ENCODE measurements at regions of chr22 and their contacts with region 1.

Region 1: DNA sequence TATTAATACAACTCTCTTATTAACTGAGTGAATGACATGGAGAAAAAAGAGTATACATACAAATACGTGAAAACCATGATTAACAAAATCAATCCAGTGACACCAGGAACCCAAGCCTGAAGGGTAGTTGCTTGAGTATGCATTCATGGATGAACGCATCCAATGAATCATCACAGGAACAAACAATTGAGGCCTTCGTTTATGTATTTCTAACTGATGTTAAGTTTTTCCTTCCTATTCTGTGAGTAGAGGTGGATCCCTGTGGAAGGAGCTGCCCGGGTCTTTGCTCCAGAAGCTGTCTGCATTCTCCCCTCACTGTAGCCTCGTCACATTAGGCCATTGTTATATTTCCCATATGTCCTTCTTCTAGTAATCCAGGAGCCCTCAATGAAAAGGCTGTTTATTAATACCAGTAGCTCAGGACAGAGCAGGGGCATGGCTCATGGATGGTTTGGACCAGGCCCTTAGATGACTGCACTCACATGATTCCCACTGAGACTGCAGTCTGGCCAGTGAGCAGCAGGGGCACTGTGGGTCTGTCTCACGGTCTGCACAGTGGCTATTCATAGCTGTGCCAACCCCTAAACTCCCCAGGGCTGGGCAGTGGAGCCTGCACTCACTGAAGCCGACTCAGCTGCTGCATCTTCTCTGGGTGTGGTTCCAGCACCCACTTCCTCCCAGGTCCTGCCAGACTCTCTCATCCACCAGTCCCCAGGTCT is 128.1 kb upstream of the TOP3B start:
- DNase-seq: peak; percentile 93
- ATAC-seq: peak; percentile 97
- H3K4me3 ChIP-seq: no peak overlapping the region; the same call in 1 of the 2 replicates
- H3K27ac ChIP-seq: peak overlapping the region; percentile 88
- H3K4me1 ChIP-seq: peaks cover 18% of the 10 kb centered on the region
- H3K27me3 ChIP-seq: no peaks in the 10 kb centered on the region
- CTCF ChIP-seq: peak; percentile 77 to 89 (median 78)
- EP300 ChIP-seq: peak in 1 of 2 experiments; percentile 61; a peak in 1 of 4 replicates
- POLR2A ChIP-seq: no peak
- RAD21 ChIP-seq: peak; percentile 52

Region 2: DNA sequence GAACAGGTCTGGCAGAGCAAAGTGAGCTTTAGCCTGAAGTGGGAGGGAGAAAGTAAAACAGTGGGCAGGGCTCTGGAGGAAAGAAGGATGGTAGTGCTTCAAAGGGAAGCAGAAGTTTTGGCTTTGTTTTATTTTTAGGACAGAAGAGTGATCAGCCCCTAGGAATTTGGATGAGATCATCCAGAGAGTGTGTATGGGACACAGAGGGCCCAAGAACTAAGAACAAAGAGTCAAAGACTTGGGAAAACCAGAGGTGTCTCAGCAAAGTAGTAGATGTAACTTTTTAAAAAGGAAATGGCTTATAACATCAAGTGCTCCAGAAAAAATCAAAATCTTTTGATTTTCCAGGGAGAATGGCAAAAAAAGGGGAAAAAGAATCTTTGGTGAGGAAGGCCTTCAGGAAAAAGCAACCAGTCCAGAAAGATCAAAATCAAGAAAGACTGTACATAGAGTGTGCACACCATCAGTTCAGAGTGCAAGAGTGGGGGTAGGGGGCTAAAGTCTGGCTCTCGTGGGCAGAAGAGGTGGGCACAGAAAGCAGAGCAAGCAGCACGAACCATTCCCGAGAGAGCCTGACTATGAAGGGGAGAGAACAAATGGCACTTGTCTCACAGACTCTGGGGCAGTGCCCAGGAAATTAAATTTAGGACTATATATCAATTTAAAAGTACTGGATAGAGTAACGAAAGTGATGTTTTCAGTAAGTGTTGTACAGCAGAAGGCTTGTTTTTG is 273.3 kb before region 1 on chr22:
- CTCF ChIA-PET with region 1: no interaction called
- POLR2A ChIA-PET with region 1: no interaction called
- RAD21 ChIA-PET with region 1: no interaction called
- SMC1A ChIA-PET with region 1: no interaction called
- in situ Hi-C with region 1: no loop called
- intact Hi-C with region 1: no loop called
- DNase-seq: no peak
- ATAC-seq: no peak
- H3K4me3 ChIP-seq: no peak overlapping the region
- H3K27ac ChIP-seq: no peak overlapping the region
- H3K4me1 ChIP-seq: peaks cover 10% of the 10 kb centered on the region; the same call in 1 of the 2 replicates
- H3K27me3 ChIP-seq: no peaks in the 10 kb centered on the region
- CTCF ChIP-seq: no peak
- EP300 ChIP-seq: no peak
- POLR2A ChIP-seq: no peak
- RAD21 ChIP-seq: no peak

Region 3: GRCh38 chr22:21917181-21917958 is 193.3 kb before region 1 on chr22:
- CTCF ChIA-PET with region 1: no interaction called
- POLR2A ChIA-PET with region 1: no interaction called
- RAD21 ChIA-PET with region 1: no interaction called
- SMC1A ChIA-PET with region 1: no interaction called
- in situ Hi-C with region 1: no loop called
- intact Hi-C with region 1: no loop called
- DNase-seq: no peak
- ATAC-seq: no peak; the same call in 2 of the 3 replicates
- H3K4me3 ChIP-seq: no peak overlapping the region
- H3K27ac ChIP-seq: no peak overlapping the region
- H3K4me1 ChIP-seq: no peaks in the 10 kb centered on the region
- H3K27me3 ChIP-seq: no peaks in the 10 kb centered on the region
- CTCF ChIP-seq: no peak
- EP300 ChIP-seq: no peak
- POLR2A ChIP-seq: no peak
- RAD21 ChIP-seq: no peak

Region 4: GRCh38 chr22:22043296-22044078 is 67.2 kb before region 1 on chr22:
- CTCF ChIA-PET with region 1: interaction called, 25 read pairs
- POLR2A ChIA-PET with region 1: interaction called, 14 read pairs
- RAD21 ChIA-PET with region 1: interaction called, 34 read pairs
- SMC1A ChIA-PET with region 1: interaction called, 31 read pairs
- in situ Hi-C with region 1: no loop called
- intact Hi-C with region 1: no loop called
- DNase-seq: no peak
- ATAC-seq: peak; percentile 85
- H3K4me3 ChIP-seq: peak overlapping the region; percentile 44; the same call in 1 of the 2 replicates
- H3K27ac ChIP-seq: peak overlapping the region; percentile 58
- H3K4me1 ChIP-seq: peaks cover 15% of the 10 kb centered on the region
- H3K27me3 ChIP-seq: no peaks in the 10 kb centered on the region
- CTCF ChIP-seq: peak in 2 of 3 experiments; percentile 2 to 20; a peak in 1 of 6 replicates
- EP300 ChIP-seq: no peak
- POLR2A ChIP-seq: peak; percentile 56
- RAD21 ChIP-seq: no peak

Region 5: DNA sequence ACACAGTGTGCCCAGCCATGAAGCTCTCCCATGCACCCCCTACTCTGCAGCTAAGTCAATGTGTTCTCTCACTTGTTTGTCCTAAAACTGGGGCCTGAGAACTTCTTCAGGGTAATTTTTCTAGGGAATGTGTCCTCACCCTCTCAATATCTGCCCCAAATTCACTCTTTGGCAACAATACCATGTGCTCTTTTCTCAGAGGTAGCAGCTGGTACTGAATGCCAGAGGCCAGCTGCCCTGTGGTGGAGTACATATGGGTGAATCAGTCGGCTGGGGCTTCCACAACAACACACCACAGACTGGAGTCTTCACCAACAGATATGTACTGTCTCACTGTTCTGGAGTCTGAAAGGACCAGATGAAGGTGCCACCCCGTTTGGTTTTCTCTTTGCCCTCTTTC is 30.4 kb before region 1 on chr22:
- CTCF ChIA-PET with region 1: interaction called, 6 read pairs
- POLR2A ChIA-PET with region 1: interaction called, 3 read pairs
- RAD21 ChIA-PET with region 1: interaction called, 4 read pairs
- SMC1A ChIA-PET with region 1: interaction called, 10 read pairs
- in situ Hi-C with region 1: no loop called
- intact Hi-C with region 1: no loop called
- DNase-seq: no peak
- ATAC-seq: no peak
- H3K4me3 ChIP-seq: no peak overlapping the region
- H3K27ac ChIP-seq: no peak overlapping the region
- H3K4me1 ChIP-seq: no peaks in the 10 kb centered on the region
- H3K27me3 ChIP-seq: no peaks in the 10 kb centered on the region
- CTCF ChIP-seq: no peak
- EP300 ChIP-seq: no peak
- POLR2A ChIP-seq: no peak
- RAD21 ChIP-seq: no peak

Region 6: DNA sequence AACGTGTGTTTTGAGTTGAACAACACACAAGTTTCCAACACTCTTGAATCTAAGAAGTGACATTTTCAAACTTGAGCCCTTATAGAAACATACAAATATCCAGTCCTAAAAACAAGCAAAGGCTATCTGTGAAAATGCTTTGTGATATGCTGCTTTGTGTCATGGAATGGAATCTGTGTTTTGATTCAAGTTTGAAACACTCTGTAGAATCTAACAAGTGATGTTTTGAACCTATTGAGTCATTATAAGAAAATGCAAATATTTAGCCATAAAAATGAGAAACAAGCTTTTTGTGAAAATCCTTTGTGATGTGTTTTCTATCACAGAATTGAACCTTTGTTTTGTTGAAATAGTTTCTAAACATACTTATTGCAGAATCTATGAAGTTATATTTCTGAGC is 28.2 kb after region 1 on chr22:
- CTCF ChIA-PET with region 1: interaction called, 27 read pairs
- POLR2A ChIA-PET with region 1: no interaction called
- RAD21 ChIA-PET with region 1: interaction called, 11 read pairs
- SMC1A ChIA-PET with region 1: interaction called, 55 read pairs
- in situ Hi-C with region 1: no loop called
- intact Hi-C with region 1: no loop called
- DNase-seq: no peak
- ATAC-seq: no peak
- H3K4me3 ChIP-seq: no peak overlapping the region
- H3K27ac ChIP-seq: no peak overlapping the region
- H3K4me1 ChIP-seq: no peaks in the 10 kb centered on the region
- H3K27me3 ChIP-seq: no peaks in the 10 kb centered on the region
- CTCF ChIP-seq: no peak
- EP300 ChIP-seq: no peak
- POLR2A ChIP-seq: no peak
- RAD21 ChIP-seq: no peak

Region 7: DNA sequence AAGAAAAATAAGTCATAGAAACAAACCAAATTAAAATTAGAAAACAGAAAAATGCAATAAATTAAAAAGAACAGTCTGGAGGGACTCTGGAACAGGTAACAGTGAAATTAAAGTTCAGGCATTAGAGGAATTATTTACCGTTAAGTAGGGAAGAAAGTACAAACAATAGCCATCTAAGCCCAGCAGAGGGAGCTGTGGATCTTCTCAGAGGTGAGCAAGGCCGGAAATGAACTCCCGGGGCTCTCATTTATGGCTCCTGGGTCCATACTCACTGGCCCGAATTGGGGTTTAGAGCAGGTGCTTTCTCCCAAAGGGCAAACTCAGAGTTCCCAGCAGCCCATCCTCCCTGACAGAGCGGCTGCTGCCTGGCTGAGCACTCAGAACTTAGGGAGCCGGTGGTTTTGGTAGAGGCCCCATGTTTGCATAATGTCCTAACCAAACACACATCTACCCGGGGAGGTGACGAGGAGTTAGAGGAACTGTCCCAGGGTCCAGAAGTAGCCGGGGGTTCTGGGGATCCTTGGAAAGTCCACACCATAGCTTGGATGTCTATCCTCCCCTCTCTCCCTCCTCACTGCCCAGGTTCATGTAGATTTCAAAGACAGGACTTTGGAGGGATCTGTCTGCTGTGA is 46.1 kb after region 1 on chr22:
- CTCF ChIA-PET with region 1: interaction called, 24 read pairs
- POLR2A ChIA-PET with region 1: interaction called, 5 read pairs
- RAD21 ChIA-PET with region 1: interaction called, 22 read pairs
- SMC1A ChIA-PET with region 1: interaction called, 33 read pairs
- in situ Hi-C with region 1: no loop called
- intact Hi-C with region 1: loop called (anchors 1 kb)
- DNase-seq: peak; percentile 59
- ATAC-seq: peak; percentile 94
- H3K4me3 ChIP-seq: no peak overlapping the region
- H3K27ac ChIP-seq: peak overlapping the region; percentile 86
- H3K4me1 ChIP-seq: peaks cover 10% of the 10 kb centered on the region
- H3K27me3 ChIP-seq: no peaks in the 10 kb centered on the region
- CTCF ChIP-seq: peak; percentile 67 to 79 (median 75)
- EP300 ChIP-seq: 0 out of 4 replicates have a peak, but pooled peaks of 1 of the 2 experiments have one; percentile 23
- POLR2A ChIP-seq: peak; percentile 41
- RAD21 ChIP-seq: peak; percentile 80

Region 8: GRCh38 chr22:22195265-22196017 is 84.7 kb after region 1 on chr22:
- CTCF ChIA-PET with region 1: interaction called, 22 read pairs
- POLR2A ChIA-PET with region 1: interaction called, 13 read pairs
- RAD21 ChIA-PET with region 1: interaction called, 27 read pairs
- SMC1A ChIA-PET with region 1: interaction called, 26 read pairs
- in situ Hi-C with region 1: no loop called
- intact Hi-C with region 1: loop called (anchors 1 kb)
- DNase-seq: peak; percentile 91
- ATAC-seq: peak; percentile 94
- H3K4me3 ChIP-seq: peak overlapping the region; percentile 62; the same call in 1 of the 2 replicates
- H3K27ac ChIP-seq: peak overlapping the region; percentile 63
- H3K4me1 ChIP-seq: peaks cover 18% of the 10 kb centered on the region
- H3K27me3 ChIP-seq: no peaks in the 10 kb centered on the region
- CTCF ChIP-seq: peak; percentile 94 to 95 (median 94); a peak in 5 of 6 replicates
- EP300 ChIP-seq: peak in 1 of 2 experiments; percentile 64; a peak in 3 of 4 replicates
- POLR2A ChIP-seq: peak; percentile 56; the same call in 1 of the 2 replicates
- RAD21 ChIP-seq: peak; percentile 55

Region 9: DNA sequence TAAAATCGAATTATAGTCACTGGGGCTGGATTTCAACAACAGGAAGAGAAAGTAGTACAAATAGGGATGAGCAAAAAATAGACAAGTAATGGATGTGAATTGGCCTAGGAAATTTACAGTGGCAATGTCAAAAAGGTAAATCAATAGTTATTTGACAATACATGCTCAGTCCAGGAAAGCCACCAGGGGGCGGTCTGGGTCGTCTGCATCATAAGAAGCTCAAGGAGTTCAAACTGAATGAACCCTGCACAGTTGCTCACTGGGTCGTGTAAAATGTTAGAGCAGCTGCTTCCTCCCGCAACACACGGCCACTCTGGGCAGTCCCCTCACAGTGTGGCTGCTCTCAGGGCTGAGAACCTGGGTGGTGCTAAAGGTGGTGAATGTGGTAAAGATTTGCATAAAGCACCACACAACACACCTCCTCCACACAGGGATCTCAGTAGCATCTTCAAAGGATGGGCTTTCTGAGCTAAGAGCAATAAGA is 312.0 kb after region 1 on chr22:
- CTCF ChIA-PET with region 1: no interaction called
- POLR2A ChIA-PET with region 1: no interaction called
- RAD21 ChIA-PET with region 1: no interaction called
- SMC1A ChIA-PET with region 1: no interaction called
- in situ Hi-C with region 1: no loop called
- intact Hi-C with region 1: no loop called
- DNase-seq: peak; percentile 85
- ATAC-seq: peak; percentile 100
- H3K4me3 ChIP-seq: no peak overlapping the region
- H3K27ac ChIP-seq: no peak overlapping the region
- H3K4me1 ChIP-seq: no peaks in the 10 kb centered on the region
- H3K27me3 ChIP-seq: no peaks in the 10 kb centered on the region
- CTCF ChIP-seq: peak; percentile 55 to 72 (median 62)
- EP300 ChIP-seq: 0 out of 4 replicates have a peak, but pooled peaks have one; percentile 27 to 30
- POLR2A ChIP-seq: no peak
- RAD21 ChIP-seq: peak; percentile 48

Region 10: GRCh38 chr22:22935546-22936157 is 824.9 kb after region 1 on chr22:
- CTCF ChIA-PET with region 1: interaction called, 4 read pairs
- POLR2A ChIA-PET with region 1: interaction called, 6 read pairs
- RAD21 ChIA-PET with region 1: interaction called, 21 read pairs
- SMC1A ChIA-PET with region 1: interaction called, 7 read pairs
- in situ Hi-C with region 1: no loop called
- intact Hi-C with region 1: loop called (anchors 5 kb)
- DNase-seq: peak; percentile 99
- ATAC-seq: peak; percentile 84
- H3K4me3 ChIP-seq: peak overlapping the region; percentile 24; the same call in 1 of the 2 replicates
- H3K27ac ChIP-seq: peak overlapping the region; percentile 99
- H3K4me1 ChIP-seq: peaks cover 92% of the 10 kb centered on the region
- H3K27me3 ChIP-seq: no peaks in the 10 kb centered on the region
- CTCF ChIP-seq: peak; percentile 53 to 83 (median 71)
- EP300 ChIP-seq: peak; percentile 100
- POLR2A ChIP-seq: no peak; the same call in 1 of the 2 replicates
- RAD21 ChIP-seq: peak; percentile 75

Measured in GM12878 (cell line).